ENCODE measurements at regions of chr10 and their contacts with region 1.

Region 1: DNA sequence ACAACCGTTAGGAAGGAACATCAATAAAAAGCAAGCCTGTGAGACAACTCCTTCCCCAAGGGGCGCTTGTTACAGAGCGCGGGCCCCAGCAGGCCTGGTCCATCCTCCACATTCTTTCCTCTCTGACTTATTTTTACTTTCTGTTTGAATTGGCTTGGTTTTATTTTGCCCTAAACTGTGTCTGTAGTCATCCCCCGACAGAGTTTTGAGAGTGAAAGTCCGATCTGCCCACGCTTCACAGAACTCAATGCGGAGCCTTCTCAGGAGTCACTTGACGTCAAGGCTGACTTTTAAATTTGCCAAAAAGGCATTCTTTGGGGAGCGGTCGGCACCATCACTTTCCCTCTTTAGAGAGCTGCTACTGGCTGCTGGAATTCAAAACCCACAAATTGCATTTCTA is 150.1 kb upstream of the KLF6 start:
- DNase-seq: peak in 6 of 9 donors; percentile 4 to 73 (median 22)
- ATAC-seq: peak; percentile 84
- H3K4me3 ChIP-seq: peak overlapping the region; percentile 32
- H3K4me3 Mint-ChIP-seq: peak overlapping the region; percentile 43 to 83 (median 78)
- H3K27ac ChIP-seq: peak overlapping the region; percentile 43
- H3K27ac Mint-ChIP-seq: peak overlapping the region; percentile 67 to 95 (median 86)
- H3K4me1 ChIP-seq: peaks cover 0 to 5% of the 10 kb centered on the region in 2 donors
- H3K4me1 Mint-ChIP-seq: peaks cover 11 to 61% (median 17%) of the 10 kb centered on the region in 7 donors
- H3K27me3 ChIP-seq: no peaks in the 10 kb centered on the region
- H3K27me3 Mint-ChIP-seq: no peaks in the 10 kb centered on the region

Region 2: GRCh38 chr10:3585385-3585784 is 349.8 kb before region 1 on chr10:
- CTCF ChIA-PET with region 1: no interaction called
- POLR2A ChIA-PET with region 1: no interaction called
- intact Hi-C with region 1: no loop called
- DNase-seq: no peak
- ATAC-seq: no peak
- H3K4me3 ChIP-seq: no peak overlapping the region
- H3K4me3 Mint-ChIP-seq: no peak overlapping the region
- H3K27ac ChIP-seq: no peak overlapping the region
- H3K27ac Mint-ChIP-seq: no peak overlapping the region
- H3K4me1 ChIP-seq: no peaks in the 10 kb centered on the region
- H3K4me1 Mint-ChIP-seq: peaks cover 0 to under 1% (median 0%) of the 10 kb centered on the region in 7 donors
- H3K27me3 ChIP-seq: no peaks in the 10 kb centered on the region
- H3K27me3 Mint-ChIP-seq: peaks cover 0 to 29% (median 11%) of the 10 kb centered on the region in 5 donors

Region 3: GRCh38 chr10:3811291-3811870 is 123.8 kb before region 1 on chr10:
- CTCF ChIA-PET with region 1: no interaction called
- POLR2A ChIA-PET with region 1: no interaction called
- intact Hi-C with region 1: loop called in 1 of 2 experiments (anchors 1 kb)
- DNase-seq: peak in 6 of 9 donors; percentile 22 to 54 (median 32)
- ATAC-seq: peak; percentile 62
- H3K4me3 ChIP-seq: peak overlapping the region; percentile 33
- H3K4me3 Mint-ChIP-seq: peak overlapping the region; percentile 10 to 85 (median 70)
- H3K27ac ChIP-seq: peak overlapping the region; percentile 71
- H3K27ac Mint-ChIP-seq: peak overlapping the region in 6 of 9 donors; percentile 67 to 91 (median 88)
- H3K4me1 ChIP-seq: peaks cover 52 to 65% of the 10 kb centered on the region in 2 donors
- H3K4me1 Mint-ChIP-seq: peaks cover 41 to 80% (median 63%) of the 10 kb centered on the region in 7 donors
- H3K27me3 ChIP-seq: no peaks in the 10 kb centered on the region
- H3K27me3 Mint-ChIP-seq: no peaks in the 10 kb centered on the region

Region 4: GRCh38 chr10:3828404-3829155 is 106.6 kb before region 1 on chr10:
- CTCF ChIA-PET with region 1: no interaction called
- POLR2A ChIA-PET with region 1: no interaction called
- intact Hi-C with region 1: loop called in 1 of 2 experiments (anchors 1 kb)
- DNase-seq: peak in 6 of 9 donors; percentile 40 to 66 (median 54)
- ATAC-seq: peak; percentile 63
- H3K4me3 ChIP-seq: peak overlapping the region; percentile 65
- H3K4me3 Mint-ChIP-seq: peak overlapping the region; percentile 73 to 88 (median 78)
- H3K27ac ChIP-seq: peak overlapping the region; percentile 73
- H3K27ac Mint-ChIP-seq: peak overlapping the region; percentile 80 to 92 (median 90)
- H3K4me1 ChIP-seq: peaks cover 15 to 17% of the 10 kb centered on the region in 2 donors
- H3K4me1 Mint-ChIP-seq: peaks cover 12 to 54% (median 22%) of the 10 kb centered on the region in 7 donors
- H3K27me3 ChIP-seq: no peaks in the 10 kb centered on the region
- H3K27me3 Mint-ChIP-seq: no peaks in the 10 kb centered on the region

Region 5: DNA sequence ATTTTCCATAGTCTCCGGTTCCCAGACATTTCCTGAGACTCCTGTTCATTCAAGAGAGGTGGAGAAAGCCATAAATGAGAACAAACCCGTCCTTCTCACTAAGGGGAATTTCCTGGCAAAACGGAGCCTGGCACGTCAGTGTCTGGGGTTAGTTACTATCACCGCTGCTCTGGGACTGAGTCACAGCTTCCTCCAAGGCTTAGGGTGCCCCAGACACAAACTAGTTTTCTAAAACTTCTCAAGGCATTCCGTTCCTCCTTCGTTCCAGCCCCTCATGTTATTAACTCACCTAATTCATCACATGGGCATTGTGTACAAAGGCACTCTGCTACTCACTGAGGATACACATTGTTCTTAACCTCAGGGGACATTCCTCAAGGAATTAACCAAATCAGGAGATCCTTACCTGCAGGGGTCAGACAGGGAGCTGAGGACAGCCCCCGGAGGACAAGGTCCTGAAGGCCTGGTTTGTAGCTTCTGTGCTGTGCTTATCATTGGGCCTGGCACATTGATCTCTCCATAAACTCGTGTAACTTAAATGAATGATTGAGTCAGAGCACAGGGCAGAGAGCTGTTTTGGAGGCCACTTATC is 47.2 kb before region 1 on chr10:
- CTCF ChIA-PET with region 1: no interaction called
- POLR2A ChIA-PET with region 1: no interaction called
- intact Hi-C with region 1: loop called in 1 of 2 experiments (anchors 5 kb)
- DNase-seq: no peak
- ATAC-seq: peak; percentile 85
- H3K4me3 ChIP-seq: no peak overlapping the region
- H3K4me3 Mint-ChIP-seq: peak overlapping the region in 1 of 10 donors; percentile 62
- H3K27ac ChIP-seq: no peak overlapping the region
- H3K27ac Mint-ChIP-seq: peak overlapping the region in 1 of 9 donors; percentile 84
- H3K4me1 ChIP-seq: peaks cover 0 to 32% of the 10 kb centered on the region in 2 donors
- H3K4me1 Mint-ChIP-seq: peaks cover 4 to 43% (median 10%) of the 10 kb centered on the region in 7 donors
- H3K27me3 ChIP-seq: no peaks in the 10 kb centered on the region
- H3K27me3 Mint-ChIP-seq: peaks cover 0 to 5% (median 0%) of the 10 kb centered on the region in 5 donors

Region 6: DNA sequence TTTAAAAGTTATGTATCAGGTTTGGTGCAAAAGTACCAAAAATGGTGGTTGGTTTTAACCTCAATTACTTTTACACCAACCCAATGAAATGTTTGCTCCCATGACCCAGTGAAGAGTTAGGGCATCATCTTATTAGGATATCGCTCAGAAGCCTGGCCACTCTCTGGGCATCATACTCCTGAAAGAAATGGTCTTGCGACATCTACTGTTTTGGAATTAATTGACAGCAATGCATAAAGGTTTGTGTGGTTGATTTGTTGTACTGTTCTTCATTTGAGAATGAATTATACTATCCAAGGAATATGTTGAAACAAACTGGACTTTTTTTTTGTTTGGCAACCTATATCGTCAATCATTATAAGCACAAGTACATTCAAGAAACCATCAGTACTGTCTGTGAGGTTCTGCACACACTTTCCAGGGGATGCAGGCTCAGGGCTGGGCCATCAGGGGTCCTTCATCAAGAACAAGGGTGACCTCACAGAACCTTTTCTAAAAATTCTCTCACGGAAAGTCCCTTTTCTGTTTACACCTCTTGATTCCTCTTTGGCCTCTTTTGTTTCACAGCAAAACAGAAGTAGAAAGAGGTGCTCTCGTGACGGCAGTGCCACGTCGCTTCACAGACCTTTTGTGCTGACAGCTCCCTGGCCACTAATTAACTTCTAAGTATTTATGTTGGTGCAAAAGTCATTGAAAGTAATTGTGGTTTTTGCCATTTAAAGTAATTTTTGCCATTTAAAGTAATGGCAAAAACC is 32.9 kb before region 1 on chr10:
- CTCF ChIA-PET with region 1: no interaction called
- POLR2A ChIA-PET with region 1: no interaction called
- intact Hi-C with region 1: loop called in 1 of 2 experiments (anchors 2 kb)
- DNase-seq: no peak
- ATAC-seq: peak; percentile 86
- H3K4me3 ChIP-seq: no peak overlapping the region
- H3K4me3 Mint-ChIP-seq: peak overlapping the region in 1 of 10 donors; percentile 7
- H3K27ac ChIP-seq: no peak overlapping the region
- H3K27ac Mint-ChIP-seq: peak overlapping the region in 2 of 9 donors; percentile 2 to 79
- H3K4me1 ChIP-seq: peaks cover 0 to 16% of the 10 kb centered on the region in 2 donors
- H3K4me1 Mint-ChIP-seq: peaks cover 0 to 35% (median 4%) of the 10 kb centered on the region in 7 donors
- H3K27me3 ChIP-seq: no peaks in the 10 kb centered on the region
- H3K27me3 Mint-ChIP-seq: no peaks in the 10 kb centered on the region

Region 7: GRCh38 chr10:3948843-3949242 is 13.7 kb after region 1 on chr10:
- CTCF ChIA-PET with region 1: no interaction called
- POLR2A ChIA-PET with region 1: interaction called, 3 read pairs
- intact Hi-C with region 1: loop called (anchors 1 kb)
- DNase-seq: peak; percentile 21 to 79 (median 61)
- ATAC-seq: peak; percentile 94
- H3K4me3 ChIP-seq: no peak overlapping the region
- H3K4me3 Mint-ChIP-seq: peak overlapping the region in 9 of 10 donors; percentile 16 to 67 (median 47)
- H3K27ac ChIP-seq: no peak overlapping the region
- H3K27ac Mint-ChIP-seq: peak overlapping the region; percentile 32 to 97 (median 78)
- H3K4me1 ChIP-seq: peaks cover 20 to 59% of the 10 kb centered on the region in 2 donors
- H3K4me1 Mint-ChIP-seq: peaks cover 14 to 60% (median 36%) of the 10 kb centered on the region in 7 donors
- H3K27me3 ChIP-seq: no peaks in the 10 kb centered on the region
- H3K27me3 Mint-ChIP-seq: no peaks in the 10 kb centered on the region

Region 8: DNA sequence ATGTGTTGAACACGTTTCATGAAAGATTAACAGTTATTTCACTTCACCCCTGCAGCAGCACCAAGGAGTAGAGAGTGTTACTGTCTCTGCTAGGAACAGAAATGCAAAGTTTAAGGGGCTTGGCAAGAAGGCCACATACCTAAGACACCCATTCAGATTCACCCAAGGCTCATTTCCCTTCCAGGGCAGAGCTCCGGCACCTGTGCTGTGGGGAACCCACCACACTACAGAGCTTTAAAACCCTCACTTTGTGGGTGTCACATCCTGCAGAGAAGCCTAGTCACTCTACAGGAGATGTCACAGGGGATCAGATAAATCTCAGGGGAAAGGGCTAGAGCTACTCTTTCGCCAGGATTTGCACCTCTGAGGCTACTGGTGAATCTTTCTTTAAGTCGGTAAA is 25.9 kb after region 1 on chr10:
- CTCF ChIA-PET with region 1: no interaction called
- POLR2A ChIA-PET with region 1: no interaction called
- intact Hi-C with region 1: loop called in 1 of 2 experiments (anchors 1 kb)
- DNase-seq: peak in 6 of 9 donors; percentile 32 to 55 (median 40)
- ATAC-seq: peak; percentile 92
- H3K4me3 ChIP-seq: no peak overlapping the region
- H3K4me3 Mint-ChIP-seq: peak overlapping the region in 6 of 10 donors; percentile 8 to 70 (median 28)
- H3K27ac ChIP-seq: no peak overlapping the region
- H3K27ac Mint-ChIP-seq: peak overlapping the region in 8 of 9 donors; percentile 10 to 84 (median 50)
- H3K4me1 ChIP-seq: peaks cover 12 to 33% of the 10 kb centered on the region in 2 donors
- H3K4me1 Mint-ChIP-seq: peaks cover 12 to 43% (median 18%) of the 10 kb centered on the region in 7 donors
- H3K27me3 ChIP-seq: no peaks in the 10 kb centered on the region
- H3K27me3 Mint-ChIP-seq: no peaks in the 10 kb centered on the region